Heart right ventricle (tissue), 16 donors: ENCODE measurements at regions of chr5 and their contacts with region 1.

Region 1: GRCh38 chr5:149990518-149991376 is 9.7 kb downstream of the TIGD6 start:
- DNase-seq: peak; percentile 42 to 74
- ATAC-seq: peak; percentile 58 to 89 (median 77)
- H3K4me3 ChIP-seq: no peak overlapping the region
- H3K27ac ChIP-seq: no peak overlapping the region
- H3K4me1 ChIP-seq: peaks cover 0 to 12% (median 0%) of the 10 kb centered on the region in 9 donors
- H3K27me3 ChIP-seq: no peaks in the 10 kb centered on the region
- CTCF ChIP-seq: peak; percentile 79 to 94 (median 91)

Region 2: DNA sequence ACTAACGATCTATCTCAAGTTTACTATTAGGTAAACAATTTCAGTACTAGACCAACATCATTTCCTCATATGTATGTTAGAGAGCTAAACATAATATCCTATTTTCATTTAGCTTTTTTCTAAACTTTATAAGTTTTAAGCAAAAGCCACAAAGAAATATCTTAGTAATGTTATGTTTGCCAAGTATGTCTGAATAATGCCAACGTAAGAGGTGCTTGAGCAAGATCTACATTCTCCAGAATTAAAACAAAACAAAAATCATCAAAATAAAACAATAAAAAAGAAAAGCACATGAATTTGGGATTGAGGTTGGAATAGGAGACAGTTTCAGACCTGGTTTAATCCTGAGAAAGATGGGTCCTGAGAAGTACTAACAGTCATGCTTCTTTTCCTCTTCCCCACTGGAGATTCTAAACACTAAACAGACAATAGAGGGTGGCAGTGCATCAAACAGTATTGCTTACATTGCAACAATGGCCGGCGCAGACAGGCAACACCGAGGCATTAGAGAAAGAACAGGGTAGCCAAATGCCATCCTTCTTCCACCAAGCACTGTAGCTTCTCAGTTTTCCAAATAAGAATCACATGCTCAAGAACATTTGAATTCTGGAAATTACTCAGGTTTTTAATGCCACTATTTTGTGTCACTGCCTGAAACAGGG is 473.2 kb before region 1 on chr5:
- intact Hi-C with region 1: no loop called
- DNase-seq: no peak
- ATAC-seq: peak in 7 of 8 donors; percentile 38 to 73 (median 60)
- H3K4me3 ChIP-seq: peak overlapping the region in 2 of 10 donors; percentile 5 to 18
- H3K27ac ChIP-seq: peak overlapping the region in 5 of 10 donors; percentile 2 to 54 (median 21)
- H3K4me1 ChIP-seq: peaks cover 0 to 100% (median 94%) of the 10 kb centered on the region in 9 donors
- H3K27me3 ChIP-seq: no peaks in the 10 kb centered on the region
- CTCF ChIP-seq: peak in 4 of 9 donors; percentile 11 to 43 (median 32)

Region 3: GRCh38 chr5:149636851-149637246 is 353.9 kb before region 1 on chr5:
- intact Hi-C with region 1: loop called (anchors 1 to 5 kb)
- DNase-seq: peak in 1 of 2 donors; percentile 87
- ATAC-seq: peak; percentile 45 to 72 (median 56)
- H3K4me3 ChIP-seq: no peak overlapping the region
- H3K27ac ChIP-seq: no peak overlapping the region
- H3K4me1 ChIP-seq: peaks cover 13 to 45% (median 27%) of the 10 kb centered on the region in 9 donors
- H3K27me3 ChIP-seq: no peaks in the 10 kb centered on the region
- CTCF ChIP-seq: peak; percentile 65 to 90 (median 86)

Region 4: GRCh38 chr5:149834246-149834855 is 156.4 kb before region 1 on chr5:
- intact Hi-C with region 1: loop called (anchors 1 to 10 kb)
- DNase-seq: peak in 1 of 2 donors; percentile 67
- ATAC-seq: peak in 7 of 8 donors; percentile 9 to 44 (median 38)
- H3K4me3 ChIP-seq: no peak overlapping the region
- H3K27ac ChIP-seq: no peak overlapping the region
- H3K4me1 ChIP-seq: peaks cover 3 to 57% (median 12%) of the 10 kb centered on the region in 9 donors
- H3K27me3 ChIP-seq: no peaks in the 10 kb centered on the region
- CTCF ChIP-seq: peak; percentile 26 to 75 (median 63)

Region 5: DNA sequence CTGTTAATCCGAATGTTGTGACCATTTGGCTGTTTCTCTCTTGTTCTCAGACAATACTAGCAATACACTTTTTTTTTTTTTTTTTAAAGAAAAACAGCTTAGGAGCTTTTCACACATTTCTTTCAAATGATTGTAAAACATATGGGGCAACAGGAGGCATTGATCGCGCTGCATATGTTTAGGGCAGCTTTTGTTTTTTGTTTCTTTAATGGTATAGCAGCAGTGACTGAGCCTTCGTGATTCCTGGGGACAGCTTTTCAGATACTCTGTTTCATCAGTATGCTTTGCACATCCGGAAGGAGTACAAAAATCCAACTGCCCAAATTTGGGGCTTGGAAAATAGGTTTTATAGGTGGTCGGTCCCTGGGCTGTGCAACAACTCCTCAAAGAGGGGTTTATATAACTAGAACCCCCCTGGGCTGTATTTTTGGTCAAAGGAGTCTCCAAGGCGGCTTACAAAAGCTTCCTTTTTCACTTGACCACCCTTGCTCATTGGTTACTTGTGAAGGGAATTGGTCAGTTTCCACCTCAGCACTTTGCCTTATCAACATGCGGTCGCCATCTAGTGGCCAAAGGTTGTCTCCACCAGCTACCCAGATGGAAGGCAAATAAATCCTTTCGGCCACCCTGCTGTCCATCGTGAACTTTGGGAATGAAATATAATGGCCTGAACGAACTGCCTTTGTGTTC is 138.0 kb before region 1 on chr5:
- intact Hi-C with region 1: loop called in 2 of 10 experiments (anchors 5 kb)
- DNase-seq: peak; percentile 61 to 80
- ATAC-seq: peak in 7 of 8 donors; percentile 33 to 80 (median 62)
- H3K4me3 ChIP-seq: no peak overlapping the region
- H3K27ac ChIP-seq: peak overlapping the region in 3 of 10 donors; percentile 9 to 54 (median 37)
- H3K4me1 ChIP-seq: peaks cover 0 to 21% (median 11%) of the 10 kb centered on the region in 9 donors
- H3K27me3 ChIP-seq: no peaks in the 10 kb centered on the region
- CTCF ChIP-seq: peak; percentile 64 to 93 (median 89)

Region 6: GRCh38 chr5:150122158-150122510 is 131.4 kb after region 1 on chr5:
- intact Hi-C with region 1: no loop called
- DNase-seq: no peak
- ATAC-seq: no peak
- H3K4me3 ChIP-seq: no peak overlapping the region
- H3K27ac ChIP-seq: no peak overlapping the region
- H3K4me1 ChIP-seq: peaks cover 0 to 37% (median 0%) of the 10 kb centered on the region in 9 donors
- H3K27me3 ChIP-seq: no peaks in the 10 kb centered on the region
- CTCF ChIP-seq: peak in 4 of 9 donors; percentile 9 to 33 (median 23)